ENCODE measurements at regions of chr18 and their contacts with region 1.

Region 1: GRCh38 chr18:77114415-77115191 is 18.0 kb downstream of the MBP start:
- DNase-seq: peak; percentile 62 to 71
- H3K4me3 ChIP-seq: peak overlapping the region; percentile 12; the same call in 1 of the 2 replicates
- H3K4me3 Mint-ChIP-seq: peak overlapping the region; percentile 49
- H3K27ac Mint-ChIP-seq: peak overlapping the region; percentile 75
- H3K4me1 ChIP-seq: peaks cover 15% of the 10 kb centered on the region
- H3K4me1 Mint-ChIP-seq: peaks cover 18% of the 10 kb centered on the region
- H3K27me3 ChIP-seq: no peaks in the 10 kb centered on the region
- H3K27me3 Mint-ChIP-seq: no peaks in the 10 kb centered on the region
- CTCF ChIP-seq: no peak

Region 2: GRCh38 chr18:77087393-77088141 is 27.0 kb before region 1 on chr18:
- CTCF ChIA-PET with region 1: no interaction called
- POLR2A ChIA-PET with region 1: interaction called, 3 read pairs
- intact Hi-C with region 1: loop called (anchors 2 kb)
- DNase-seq: no peak
- H3K4me3 ChIP-seq: no peak overlapping the region
- H3K4me3 Mint-ChIP-seq: no peak overlapping the region
- H3K27ac Mint-ChIP-seq: no peak overlapping the region
- H3K4me1 ChIP-seq: peaks cover 10% of the 10 kb centered on the region
- H3K4me1 Mint-ChIP-seq: peaks cover 16% of the 10 kb centered on the region
- H3K27me3 ChIP-seq: no peaks in the 10 kb centered on the region
- H3K27me3 Mint-ChIP-seq: no peaks in the 10 kb centered on the region
- CTCF ChIP-seq: no peak

Region 3: GRCh38 chr18:77098029-77098428 is 16.6 kb before region 1 on chr18:
- CTCF ChIA-PET with region 1: no interaction called
- POLR2A ChIA-PET with region 1: no interaction called
- intact Hi-C with region 1: no loop called
- DNase-seq: no peak
- H3K4me3 ChIP-seq: no peak overlapping the region
- H3K4me3 Mint-ChIP-seq: no peak overlapping the region
- H3K27ac Mint-ChIP-seq: no peak overlapping the region
- H3K4me1 ChIP-seq: no peaks in the 10 kb centered on the region
- H3K4me1 Mint-ChIP-seq: no peaks in the 10 kb centered on the region
- H3K27me3 ChIP-seq: no peaks in the 10 kb centered on the region
- H3K27me3 Mint-ChIP-seq: no peaks in the 10 kb centered on the region
- CTCF ChIP-seq: no peak